ENCODE measurements at regions of chr1 and their contacts with region 1.

Region 1: DNA sequence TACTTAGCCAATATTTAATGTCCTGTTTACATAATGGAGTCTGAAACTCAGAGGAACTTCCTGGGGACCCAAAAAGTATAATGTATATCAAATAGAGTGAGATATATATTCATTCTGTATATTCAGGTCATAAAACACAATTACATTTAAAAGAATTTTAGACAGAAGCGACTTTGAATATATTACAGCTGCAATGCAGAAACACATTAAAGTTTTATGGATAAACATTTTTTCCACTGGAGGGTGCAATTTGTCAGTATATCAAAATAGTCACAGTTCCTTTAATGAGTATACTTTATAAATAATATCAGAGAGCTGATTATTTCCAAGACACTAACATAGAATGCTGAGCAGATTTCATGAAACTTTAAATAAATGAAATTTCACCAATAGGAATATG is 43.9 kb upstream of the CRB1 start:
- DNase-seq: no peak
- H3K4me3 Mint-ChIP-seq: no peak overlapping the region
- H3K27ac Mint-ChIP-seq: no peak overlapping the region
- H3K4me1 Mint-ChIP-seq: peaks cover 12% of the 10 kb centered on the region
- H3K27me3 Mint-ChIP-seq: no peaks in the 10 kb centered on the region
- CTCF ChIP-seq: peak; percentile 49

Region 2: DNA sequence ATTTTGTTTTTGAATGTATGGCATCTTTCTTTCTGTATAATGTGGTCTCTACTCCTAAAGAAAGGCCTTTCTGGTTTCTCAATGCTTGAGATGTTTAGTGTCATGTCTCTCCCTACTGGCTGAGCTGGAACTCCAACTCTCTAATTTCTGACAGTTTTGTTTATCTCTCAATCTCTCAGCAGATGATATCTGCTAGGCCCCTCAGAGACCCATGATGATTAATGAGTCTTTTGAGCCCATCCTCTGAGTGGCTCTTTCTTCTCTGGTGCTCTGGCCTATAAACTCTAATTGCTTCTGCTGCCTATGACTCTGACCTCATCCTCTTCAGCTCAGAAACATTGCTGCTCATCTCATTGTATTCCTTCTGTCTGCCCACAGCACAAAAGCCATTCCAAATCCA is 90.5 kb after region 1 on chr1:
- CTCF ChIA-PET with region 1: interaction called, 12 read pairs
- intact Hi-C with region 1: loop called (anchors 1 kb)
- DNase-seq: no peak
- H3K4me3 Mint-ChIP-seq: no peak overlapping the region
- H3K27ac Mint-ChIP-seq: no peak overlapping the region
- H3K4me1 Mint-ChIP-seq: peaks cover 22% of the 10 kb centered on the region
- H3K27me3 Mint-ChIP-seq: no peaks in the 10 kb centered on the region
- CTCF ChIP-seq: no peak

Region 3: GRCh38 chr1:197339106-197340060 is 115.2 kb after region 1 on chr1:
- CTCF ChIA-PET with region 1: interaction called, 17 read pairs
- intact Hi-C with region 1: loop called (anchors 1 kb)
- DNase-seq: no peak
- H3K4me3 Mint-ChIP-seq: no peak overlapping the region
- H3K27ac Mint-ChIP-seq: no peak overlapping the region
- H3K4me1 Mint-ChIP-seq: peaks cover 10% of the 10 kb centered on the region
- H3K27me3 Mint-ChIP-seq: no peaks in the 10 kb centered on the region
- CTCF ChIP-seq: no peak